Activated CD4-positive, alpha-beta T cell treated with anti-CD3 and anti-CD28 coated beads for 36 hours (primary cell): ENCODE measurements at regions of chr1 and their contacts with region 1.

Region 1: DNA sequence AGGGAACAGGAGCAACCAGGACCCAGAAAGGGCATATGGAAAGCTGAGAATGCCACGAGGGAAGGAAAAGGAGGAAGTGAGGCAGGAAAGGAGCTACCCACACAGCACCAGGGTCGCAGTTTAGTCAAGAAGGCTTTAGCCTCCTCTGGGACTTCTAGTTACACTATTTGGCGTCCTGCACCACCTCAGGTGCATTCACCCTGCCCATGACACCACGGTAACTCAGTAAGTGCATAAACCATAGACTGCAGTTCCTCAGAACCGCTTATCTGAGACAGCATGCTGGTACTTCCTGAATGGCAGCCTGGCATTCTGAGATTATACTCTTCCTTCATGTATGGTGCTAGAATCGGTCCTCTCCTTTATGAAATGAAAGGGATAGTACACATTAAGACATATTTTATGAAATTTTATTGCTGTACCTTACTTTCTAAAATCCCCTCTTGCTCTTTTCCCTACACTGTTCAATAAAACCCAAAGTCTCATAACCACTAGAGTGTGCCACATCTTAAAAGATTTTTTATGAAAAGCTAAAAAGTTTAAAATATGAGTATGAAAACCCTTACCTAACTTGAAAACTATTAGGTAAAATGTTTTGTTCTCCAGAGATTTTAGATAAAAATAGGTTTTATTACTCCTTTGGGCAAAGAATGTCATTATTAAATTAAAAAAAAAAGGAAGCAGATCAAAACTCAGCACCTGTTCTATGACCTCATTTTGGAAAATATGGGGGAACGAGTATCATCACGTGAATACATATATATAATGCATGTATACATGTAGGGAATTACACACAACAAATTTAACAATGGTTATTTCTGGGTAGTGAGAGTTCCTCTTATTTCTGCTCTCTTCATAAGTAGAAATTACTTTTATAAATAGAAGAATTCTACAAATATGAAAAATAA is 67.3 kb downstream of the VAV3 start:
- DNase-seq: peak; percentile 18
- ATAC-seq: peak; percentile 79
- H3K4me3 Mint-ChIP-seq: peak overlapping the region; percentile 12
- H3K27ac Mint-ChIP-seq: peak overlapping the region; percentile 69
- H3K4me1 Mint-ChIP-seq: peaks cover 47% of the 10 kb centered on the region
- H3K27me3 Mint-ChIP-seq: no peaks in the 10 kb centered on the region

Region 2: DNA sequence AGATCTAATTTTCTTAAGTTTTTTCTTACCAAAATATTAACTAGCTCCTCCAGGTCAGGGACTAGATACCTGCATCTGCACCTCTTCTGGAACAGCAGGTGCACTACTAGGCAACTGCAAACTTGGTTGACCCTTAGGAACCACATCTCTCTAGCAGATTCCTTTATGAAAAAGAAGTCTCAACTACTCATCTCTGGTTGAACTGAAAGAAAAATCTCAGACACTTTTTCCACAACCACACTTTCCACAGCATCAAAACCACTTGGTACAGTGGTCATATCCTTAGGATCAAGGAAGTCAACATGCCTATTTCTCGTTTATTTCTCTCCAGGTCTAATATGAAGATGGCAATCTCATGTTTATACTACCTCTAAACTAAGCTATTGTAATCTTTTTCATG is 15.0 kb after region 1 on chr1:
- CTCF ChIA-PET with region 1: interaction called, 4 read pairs
- POLR2A ChIA-PET with region 1: no interaction called
- intact Hi-C with region 1: loop called in 1 of 2 experiments (anchors 1 kb)
- DNase-seq: no peak
- ATAC-seq: no peak
- H3K4me3 Mint-ChIP-seq: no peak overlapping the region
- H3K27ac Mint-ChIP-seq: no peak overlapping the region
- H3K4me1 Mint-ChIP-seq: peaks cover 13% of the 10 kb centered on the region
- H3K27me3 Mint-ChIP-seq: no peaks in the 10 kb centered on the region

Region 3: DNA sequence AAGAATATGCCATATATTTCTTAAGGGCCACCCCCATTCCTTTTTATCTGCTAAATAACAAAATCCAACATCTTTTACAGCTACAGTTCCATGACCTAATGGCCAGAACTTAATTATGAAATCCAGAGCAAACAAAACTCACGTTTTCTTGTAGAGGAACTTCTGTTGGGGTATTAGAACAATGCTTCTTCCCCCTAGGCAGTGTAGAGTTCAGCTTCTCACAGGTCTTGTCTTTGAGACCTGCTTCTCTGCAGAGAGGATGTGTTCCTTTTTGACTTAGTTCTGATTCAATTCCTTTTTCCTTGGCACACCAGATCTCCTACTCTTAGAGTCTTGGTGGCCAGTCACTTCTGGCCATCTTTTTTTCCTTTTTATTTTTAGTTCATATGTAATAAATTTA is 45.1 kb after region 1 on chr1:
- CTCF ChIA-PET with region 1: no interaction called
- POLR2A ChIA-PET with region 1: interaction called, 12 read pairs
- intact Hi-C with region 1: no loop called
- DNase-seq: no peak
- ATAC-seq: no peak
- H3K4me3 Mint-ChIP-seq: no peak overlapping the region
- H3K27ac Mint-ChIP-seq: no peak overlapping the region
- H3K4me1 Mint-ChIP-seq: peaks cover 34% of the 10 kb centered on the region
- H3K27me3 Mint-ChIP-seq: no peaks in the 10 kb centered on the region